Tibial artery (tissue), 4 donors: ENCODE measurements at regions of chrX and their contacts with region 1.

Region 1: GRCh38 chrX:40097497-40098263 is at the start of gene BCOR:
- DNase-seq: peak in 1 of 2 donors; percentile 88
- H3K4me3 ChIP-seq: peak within 1 kb of the TSS; percentile 86 to 95
- H3K27ac ChIP-seq: peak within 1 kb of the TSS; percentile 93 to 97
- H3K4me1 ChIP-seq: peaks cover 0 to 61% (median 14%) of the 10 kb centered on the region in 4 donors
- H3K27me3 ChIP-seq: no peaks in the 10 kb centered on the region
- CTCF ChIP-seq: peak in 1 of 2 experiments; percentile 5

Region 2: GRCh38 chrX:40153335-40154249 is 55.9 kb after region 1 on chrX:
- intact Hi-C with region 1: loop called (anchors 5 kb)
- DNase-seq: peak in 1 of 2 donors; percentile 73
- H3K4me3 ChIP-seq: peak overlapping the region; percentile 53 to 59
- H3K27ac ChIP-seq: peak overlapping the region; percentile 67 to 73
- H3K4me1 ChIP-seq: peaks cover 0 to 43% (median 18%) of the 10 kb centered on the region in 4 donors
- H3K27me3 ChIP-seq: no peaks in the 10 kb centered on the region
- CTCF ChIP-seq: no peak